ENCODE measurements at regions of chr22 and their contacts with region 1.

Region 1: GRCh38 chr22:20130739-20131596 is 636 bp upstream of the ZDHHC8 start:
- DNase-seq: no peak
- H3K4me3 ChIP-seq: peak overlapping the region; percentile 77
- CTCF ChIP-seq: no peak

Region 2: DNA sequence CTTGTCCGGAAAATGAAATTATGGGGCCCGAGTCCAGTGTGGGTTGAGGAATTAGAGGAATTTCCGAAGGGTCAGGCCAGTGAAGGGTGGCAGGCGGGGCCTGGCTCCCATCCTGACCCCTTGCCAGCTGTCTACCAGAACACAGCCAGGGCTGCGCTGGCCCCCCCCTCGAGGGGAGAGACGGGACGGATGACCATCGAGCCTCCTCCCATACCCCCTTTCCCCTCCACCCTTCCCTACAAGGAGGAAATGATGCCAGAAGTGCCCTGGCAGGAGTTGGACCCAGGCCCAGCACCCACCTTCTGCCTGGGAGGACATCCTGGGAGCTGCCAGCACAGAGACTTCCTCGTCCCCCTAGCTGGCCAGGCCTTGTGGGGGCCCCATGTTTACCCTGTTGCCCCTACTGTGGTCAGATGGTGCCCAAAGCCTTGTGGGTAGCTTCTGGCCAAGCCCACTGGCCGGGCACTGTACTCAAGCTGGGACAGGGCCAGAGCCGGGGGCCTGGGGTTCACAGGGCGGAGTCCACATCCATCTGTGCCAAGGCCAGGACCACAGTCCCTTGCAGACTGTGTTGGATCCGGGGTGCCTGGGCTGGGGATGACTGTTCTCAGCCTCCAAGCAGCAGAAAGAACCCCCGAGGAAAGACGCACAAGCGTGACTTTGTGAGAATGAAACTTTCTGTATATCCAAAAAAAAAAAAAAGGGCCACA is 135.2 kb before region 1 on chr22:
- CTCF ChIA-PET with region 1: no interaction called
- POLR2A ChIA-PET with region 1: no interaction called
- DNase-seq: no peak
- H3K4me3 ChIP-seq: no peak overlapping the region
- CTCF ChIP-seq: no peak

Region 3: DNA sequence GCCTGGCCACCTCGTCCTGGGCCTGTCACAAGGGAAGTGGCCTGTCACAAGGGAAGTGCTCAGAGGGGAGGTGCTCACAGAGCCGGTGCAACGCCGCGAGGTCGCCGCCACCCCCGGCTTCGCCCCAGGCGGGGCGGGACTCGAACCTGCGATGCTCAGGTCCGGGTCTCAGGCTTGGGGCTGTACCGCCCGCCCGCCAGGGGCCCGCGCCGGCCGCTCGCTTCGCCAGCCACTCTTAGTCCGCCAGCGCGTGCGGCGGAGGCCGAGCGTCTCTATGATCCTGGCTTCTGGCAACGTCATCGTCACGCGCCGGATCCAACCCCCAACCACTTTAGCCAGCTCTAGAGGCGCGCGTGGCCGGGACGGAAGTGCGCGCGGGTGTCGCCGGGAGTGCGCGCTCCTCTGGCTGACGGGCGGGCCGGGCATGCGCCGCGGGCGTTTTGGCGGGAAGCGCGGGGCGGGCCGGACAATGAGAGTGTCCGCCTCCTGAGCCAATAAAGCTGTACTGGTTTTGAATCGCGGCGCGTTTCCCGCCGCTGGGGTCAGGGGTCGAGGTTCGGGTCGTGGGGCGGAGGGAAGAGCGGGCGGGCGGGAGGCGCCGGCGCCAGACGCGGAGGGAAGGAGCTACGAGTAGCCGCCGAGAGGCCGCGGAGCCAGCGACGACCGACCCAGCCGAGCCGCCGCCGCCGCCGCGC is 13.9 kb before region 1 on chr22 and contains the start of gene TRMT2A:
- CTCF ChIA-PET with region 1: interaction called, 27 read pairs
- POLR2A ChIA-PET with region 1: interaction called, 12 read pairs
- DNase-seq: peak; percentile 67
- H3K4me3 ChIP-seq: peak within 1 kb of the TSS; percentile 97
- CTCF ChIP-seq: peak; percentile 24

Region 4: GRCh38 chr22:20141186-20142077 is 10.5 kb after region 1 on chr22:
- CTCF ChIA-PET with region 1: no interaction called
- POLR2A ChIA-PET with region 1: no interaction called
- DNase-seq: peak; percentile 55
- H3K4me3 ChIP-seq: no peak overlapping the region
- CTCF ChIP-seq: no peak

Measured in AG04449 (cell line).